Activated CD4-positive, alpha-beta T cell treated with anti-CD3 and anti-CD28 coated beads for 36 hours (primary cell): ENCODE measurements at regions of chr2 and their contacts with region 1.

Region 1: DNA sequence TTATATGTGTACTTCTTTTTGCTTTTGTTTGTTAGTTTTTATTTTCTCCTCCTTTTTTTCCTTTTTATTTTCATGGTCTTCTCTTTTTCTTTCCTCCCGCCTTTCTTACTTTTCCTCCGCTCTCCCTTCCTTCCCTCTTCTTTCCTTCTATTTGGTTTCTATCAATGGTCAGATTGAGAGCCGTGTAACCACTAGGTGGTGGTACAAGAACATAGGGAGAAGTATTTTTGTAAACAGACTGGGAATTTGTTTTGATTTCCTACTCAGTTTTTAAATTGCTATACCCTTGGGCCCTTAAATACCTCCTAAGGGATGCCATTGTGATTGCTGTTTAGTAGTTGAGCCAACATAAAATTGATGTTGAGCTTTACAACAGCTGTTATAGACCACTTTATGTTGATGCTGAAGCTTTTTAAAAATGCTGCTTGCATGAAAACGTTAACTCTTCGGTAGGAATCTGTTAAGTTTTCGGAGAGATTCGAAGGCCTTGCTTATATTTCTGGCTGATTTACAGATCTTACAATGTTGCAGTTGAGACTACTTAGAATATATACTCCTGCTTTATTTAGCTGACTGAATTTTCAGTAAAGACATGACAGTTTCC is 124.2 kb downstream of the UBE2E3 start:
- DNase-seq: no peak
- ATAC-seq: no peak
- H3K4me3 Mint-ChIP-seq: peak overlapping the region; percentile 2
- H3K27ac Mint-ChIP-seq: no peak overlapping the region
- H3K4me1 Mint-ChIP-seq: peaks cover 45% of the 10 kb centered on the region
- H3K27me3 Mint-ChIP-seq: no peaks in the 10 kb centered on the region

Region 2: GRCh38 chr2:181123798-181124231 is 19.2 kb after region 1 on chr2:
- CTCF ChIA-PET with region 1: interaction called, 6 read pairs
- POLR2A ChIA-PET with region 1: interaction called, 3 read pairs
- intact Hi-C with region 1: loop called (anchors 1 kb)
- DNase-seq: peak; percentile 61
- ATAC-seq: peak; percentile 95
- H3K4me3 Mint-ChIP-seq: peak overlapping the region; percentile 58
- H3K27ac Mint-ChIP-seq: peak overlapping the region; percentile 85
- H3K4me1 Mint-ChIP-seq: peaks cover 58% of the 10 kb centered on the region
- H3K27me3 Mint-ChIP-seq: no peaks in the 10 kb centered on the region

Region 3: DNA sequence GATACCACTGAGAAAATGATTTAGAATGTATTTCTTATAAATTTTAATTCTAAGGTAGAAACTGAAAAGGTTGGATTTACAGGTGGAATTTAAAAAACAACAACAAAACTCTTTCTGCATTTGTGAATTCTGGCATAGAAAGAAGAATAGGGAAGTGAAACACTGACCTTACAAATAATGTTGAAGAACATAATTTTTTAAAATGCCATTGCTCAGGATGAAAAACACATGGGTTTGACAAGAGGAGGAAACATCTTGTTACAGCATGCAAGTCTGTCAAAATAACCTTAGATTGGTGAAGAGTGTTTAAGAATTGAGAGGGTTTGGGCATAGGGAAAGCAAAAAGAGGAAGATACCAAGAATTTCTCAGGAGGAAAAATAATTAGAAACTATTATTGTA is 60.1 kb after region 1 on chr2:
- CTCF ChIA-PET with region 1: interaction called, 3 read pairs
- POLR2A ChIA-PET with region 1: no interaction called
- intact Hi-C with region 1: loop called in 1 of 2 experiments (anchors 5 kb)
- DNase-seq: no peak
- ATAC-seq: no peak
- H3K4me3 Mint-ChIP-seq: peak overlapping the region; percentile 47
- H3K27ac Mint-ChIP-seq: peak overlapping the region; percentile 93
- H3K4me1 Mint-ChIP-seq: peaks cover 44% of the 10 kb centered on the region
- H3K27me3 Mint-ChIP-seq: no peaks in the 10 kb centered on the region

Region 4: GRCh38 chr2:181305301-181306123 is 200.9 kb after region 1 on chr2:
- CTCF ChIA-PET with region 1: interaction called, 11 read pairs
- POLR2A ChIA-PET with region 1: no interaction called
- intact Hi-C with region 1: loop called (anchors 2 kb)
- DNase-seq: peak; percentile 63
- ATAC-seq: peak; percentile 84
- H3K4me3 Mint-ChIP-seq: peak overlapping the region; percentile 60
- H3K27ac Mint-ChIP-seq: peak overlapping the region; percentile 91
- H3K4me1 Mint-ChIP-seq: peaks cover 74% of the 10 kb centered on the region
- H3K27me3 Mint-ChIP-seq: no peaks in the 10 kb centered on the region

Region 5: DNA sequence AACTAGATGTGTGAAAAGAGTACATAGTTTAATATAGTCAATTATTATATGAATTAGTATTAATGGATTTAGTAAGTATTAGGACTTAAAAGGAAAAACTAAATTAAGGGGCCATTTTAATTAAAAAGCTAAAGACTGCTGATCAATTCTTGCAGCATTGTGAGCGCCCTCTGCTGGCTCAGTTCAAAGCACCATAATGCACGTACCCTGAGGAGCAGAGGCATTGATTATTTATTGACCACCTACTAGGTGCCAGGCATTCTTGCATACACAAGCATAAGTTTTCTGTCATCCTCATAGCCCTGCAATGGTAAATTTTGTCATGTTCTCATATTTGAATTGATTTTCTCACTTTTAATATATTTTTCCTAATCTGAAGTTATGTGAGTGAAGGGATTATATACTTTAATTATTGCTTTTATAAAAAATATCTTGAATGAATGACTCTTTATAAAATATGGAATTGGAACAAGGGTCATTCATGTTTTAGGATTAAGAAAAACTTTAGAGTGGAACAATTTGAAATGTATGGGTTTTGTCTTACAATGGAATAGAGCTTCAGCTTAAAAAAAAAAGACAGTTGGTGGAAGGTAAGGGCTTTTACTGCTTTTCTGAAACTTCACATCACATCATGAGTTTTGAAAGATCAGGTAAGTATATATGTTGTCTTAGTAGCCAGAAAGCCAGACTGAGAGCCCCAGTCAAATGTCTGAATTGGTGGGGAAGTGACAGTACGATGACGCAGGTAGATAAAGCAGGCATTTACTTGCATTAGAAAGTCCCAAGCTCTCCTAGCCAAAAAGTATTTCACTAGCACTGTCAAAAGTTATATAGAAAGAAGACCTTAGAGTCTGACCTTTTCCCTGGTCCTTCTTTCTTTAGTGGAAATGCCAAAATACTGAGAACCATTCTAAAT is 362.3 kb after region 1 on chr2:
- CTCF ChIA-PET with region 1: interaction called, 27 read pairs
- POLR2A ChIA-PET with region 1: no interaction called
- intact Hi-C with region 1: loop called in 1 of 2 experiments (anchors 1 kb)
- DNase-seq: peak; percentile 90
- ATAC-seq: peak; percentile 22
- H3K4me3 Mint-ChIP-seq: no peak overlapping the region
- H3K27ac Mint-ChIP-seq: peak overlapping the region; percentile 17
- H3K4me1 Mint-ChIP-seq: peaks cover 86% of the 10 kb centered on the region
- H3K27me3 Mint-ChIP-seq: no peaks in the 10 kb centered on the region

Region 6: GRCh38 chr2:181790716-181791649 is 686.4 kb after region 1 on chr2:
- CTCF ChIA-PET with region 1: no interaction called
- POLR2A ChIA-PET with region 1: no interaction called
- intact Hi-C with region 1: loop called (anchors 2 to 5 kb)
- DNase-seq: peak; percentile 60
- ATAC-seq: peak; percentile 97
- H3K4me3 Mint-ChIP-seq: no peak overlapping the region
- H3K27ac Mint-ChIP-seq: peak overlapping the region; percentile 34
- H3K4me1 Mint-ChIP-seq: peaks cover 23% of the 10 kb centered on the region
- H3K27me3 Mint-ChIP-seq: peaks cover 6% of the 10 kb centered on the region

Region 7: DNA sequence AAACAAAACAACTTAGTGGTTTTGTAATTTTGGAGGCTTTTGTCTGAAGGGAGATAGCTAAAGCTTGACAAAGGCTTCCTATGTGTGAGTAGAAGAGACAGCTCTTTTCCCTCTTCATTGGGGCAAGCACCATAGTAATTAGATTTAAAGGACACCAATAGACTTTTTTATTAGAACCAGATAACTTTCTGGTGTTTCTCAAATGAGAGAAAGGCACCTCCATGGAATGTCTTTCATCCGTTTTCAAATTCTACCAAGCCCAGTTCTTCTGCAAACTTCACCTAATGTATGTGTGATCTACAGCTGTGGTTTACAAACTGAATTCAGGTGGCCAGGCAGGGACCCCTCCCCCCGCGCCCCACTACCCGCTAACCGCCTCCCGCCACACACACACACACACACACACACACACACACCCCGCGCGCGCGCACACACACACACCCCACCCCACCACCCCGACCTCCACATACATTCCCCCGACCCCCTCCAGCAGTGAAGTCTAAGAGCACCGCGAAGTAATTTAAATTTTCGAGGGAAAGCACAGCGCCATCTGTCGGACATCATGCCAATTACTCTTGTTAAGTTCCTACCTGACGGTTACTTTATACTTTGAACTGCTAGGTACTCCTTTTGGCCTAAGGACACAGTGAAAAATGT is 849.4 kb after region 1 on chr2:
- CTCF ChIA-PET with region 1: no interaction called
- POLR2A ChIA-PET with region 1: no interaction called
- intact Hi-C with region 1: loop called in 1 of 2 experiments (anchors 10 kb)
- DNase-seq: peak; percentile 80
- ATAC-seq: peak; percentile 60
- H3K4me3 Mint-ChIP-seq: peak overlapping the region; percentile 1
- H3K27ac Mint-ChIP-seq: no peak overlapping the region
- H3K4me1 Mint-ChIP-seq: peaks cover 19% of the 10 kb centered on the region
- H3K27me3 Mint-ChIP-seq: peaks cover 8% of the 10 kb centered on the region